ENCODE measurements at regions of chr14 and their contacts with region 1.

Region 1: GRCh38 chr14:40292664-40293063 is 860.4 kb upstream of the FBXO33 start:
- DNase-seq: no peak
- H3K4me3 ChIP-seq: no peak overlapping the region
- H3K27ac ChIP-seq: no peak overlapping the region
- H3K4me1 ChIP-seq: no peaks in the 10 kb centered on the region
- H3K27me3 ChIP-seq: no peaks in the 10 kb centered on the region
- CTCF ChIP-seq: no peak
- EP300 ChIP-seq: no peak
- POLR2A ChIP-seq: no peak

Region 2: GRCh38 chr14:38989922-38990546 is 1302.6 kb before region 1 on chr14:
- intact Hi-C with region 1: loop called in 1 of 4 experiments (anchors 5 kb)
- DNase-seq: no peak
- H3K4me3 ChIP-seq: no peak overlapping the region
- H3K27ac ChIP-seq: no peak overlapping the region
- H3K4me1 ChIP-seq: no peaks in the 10 kb centered on the region
- H3K27me3 ChIP-seq: no peaks in the 10 kb centered on the region
- CTCF ChIP-seq: no peak
- EP300 ChIP-seq: no peak
- POLR2A ChIP-seq: no peak

Region 3: DNA sequence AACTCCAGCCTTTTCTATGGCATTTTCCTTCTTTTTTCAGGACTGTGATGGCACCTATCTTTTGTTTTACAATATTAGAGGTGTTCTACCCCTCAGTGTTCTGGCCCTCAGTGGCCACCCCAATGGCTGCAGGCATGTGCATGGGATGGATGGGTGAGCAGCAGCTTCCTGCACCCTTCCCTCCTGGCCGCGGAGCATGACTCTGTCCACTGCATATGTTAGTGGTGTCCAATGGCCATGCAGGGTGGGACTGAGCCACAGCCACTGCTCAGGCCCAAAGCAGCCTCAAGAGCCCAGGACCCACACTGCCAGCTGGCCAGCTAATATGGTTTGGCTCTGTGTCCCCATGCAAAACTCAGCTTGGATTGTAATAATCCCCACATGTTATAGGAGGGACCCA is 171.9 kb after region 1 on chr14:
- intact Hi-C with region 1: no loop called
- DNase-seq: no peak
- H3K4me3 ChIP-seq: no peak overlapping the region
- H3K27ac ChIP-seq: no peak overlapping the region
- H3K4me1 ChIP-seq: no peaks in the 10 kb centered on the region
- H3K27me3 ChIP-seq: no peaks in the 10 kb centered on the region
- CTCF ChIP-seq: no peak
- EP300 ChIP-seq: no peak
- POLR2A ChIP-seq: no peak

Measured in ovary (tissue), 10 donors.